CD14-positive monocyte (primary cell): ENCODE measurements at regions of chr19 and their contacts with region 1.

Region 1: DNA sequence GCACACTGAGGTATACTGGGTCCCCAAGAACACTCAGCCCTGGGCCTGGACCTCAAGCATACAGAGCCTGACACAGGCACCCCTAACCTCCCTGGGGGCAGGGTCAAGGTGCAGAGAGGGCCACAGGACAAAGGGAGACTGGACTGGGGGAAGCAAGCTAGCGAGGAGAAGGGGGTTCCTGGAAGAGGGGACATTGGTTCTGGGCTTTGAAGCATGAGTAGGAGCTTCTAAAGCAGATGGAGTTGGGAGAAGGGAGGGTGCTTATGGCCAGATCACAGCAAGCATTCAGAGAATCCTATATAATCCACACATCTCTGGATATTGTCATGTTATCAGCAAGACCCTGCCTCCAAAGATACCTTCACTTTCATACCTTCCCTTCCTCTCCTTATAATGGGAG is 3.2 kb downstream of the CIB3 start:
- DNase-seq: no peak
- H3K4me3 ChIP-seq: no peak overlapping the region
- H3K4me3 Mint-ChIP-seq: no peak overlapping the region
- H3K27ac ChIP-seq: no peak overlapping the region
- H3K27ac Mint-ChIP-seq: no peak overlapping the region
- H3K4me1 ChIP-seq: peaks cover 22 to 32% of the 10 kb centered on the region in 2 donors
- H3K4me1 Mint-ChIP-seq: peaks cover 27% of the 10 kb centered on the region
- H3K27me3 ChIP-seq: no peaks in the 10 kb centered on the region
- H3K27me3 Mint-ChIP-seq: peaks cover 0 to 2% (median 0%) of the 10 kb centered on the region in 3 donors
- CTCF ChIP-seq: no peak

Region 2: GRCh38 chr19:15280915-15281683 is 889.0 kb before region 1 on chr19:
- intact Hi-C with region 1: no loop called
- DNase-seq: peak; percentile 20 to 59 (median 44)
- H3K4me3 ChIP-seq: no peak overlapping the region
- H3K4me3 Mint-ChIP-seq: peak overlapping the region; percentile 6 to 48
- H3K27ac ChIP-seq: peak overlapping the region; percentile 23 to 69
- H3K27ac Mint-ChIP-seq: peak overlapping the region in 5 of 7 donors; percentile 58 to 81 (median 68)
- H3K4me1 ChIP-seq: peaks cover 61 to 77% of the 10 kb centered on the region in 2 donors
- H3K4me1 Mint-ChIP-seq: peaks cover 86% of the 10 kb centered on the region
- H3K27me3 ChIP-seq: no peaks in the 10 kb centered on the region
- H3K27me3 Mint-ChIP-seq: peaks cover 0 to 3% (median 3%) of the 10 kb centered on the region in 3 donors
- CTCF ChIP-seq: peak; percentile 28

Region 3: DNA sequence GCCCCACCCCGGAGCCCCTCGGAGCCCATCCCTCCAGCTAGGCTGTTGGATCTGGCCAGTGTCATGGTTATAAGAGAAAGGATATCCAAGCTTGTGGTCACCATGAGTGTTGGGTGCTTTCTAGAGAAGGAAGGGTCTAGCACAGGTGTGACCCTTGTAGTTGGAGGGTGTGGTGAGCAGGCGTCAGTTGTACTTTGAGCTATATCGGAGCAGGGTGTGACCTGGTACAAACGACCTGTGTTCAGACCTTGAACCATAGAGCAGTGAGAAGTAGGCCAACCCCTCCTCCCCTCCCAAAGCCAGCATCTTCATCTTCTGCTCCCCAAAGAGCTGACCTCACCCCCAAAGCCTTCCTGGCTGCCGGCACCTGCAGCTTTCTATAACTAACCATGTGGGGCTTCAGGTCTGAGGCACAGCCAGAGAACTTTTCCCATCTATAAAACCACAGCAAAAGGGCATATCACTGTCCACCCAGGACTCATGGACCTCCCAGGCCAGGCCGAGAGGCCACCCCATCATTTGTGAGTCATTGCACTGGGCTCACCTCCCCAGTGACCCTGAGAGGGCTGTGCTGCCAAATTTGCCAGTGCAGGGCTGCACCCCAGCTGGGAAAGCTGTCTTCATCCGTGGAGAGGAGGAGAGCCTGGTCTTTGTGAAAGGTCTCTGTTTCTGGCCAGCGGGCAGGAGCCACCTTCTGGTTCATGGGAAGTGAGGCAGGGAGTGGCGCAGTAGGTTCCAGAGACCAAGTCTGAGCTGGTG is 44.2 kb before region 1 on chr19:
- intact Hi-C with region 1: loop called in 1 of 2 experiments (anchors 5 kb)
- DNase-seq: no peak
- H3K4me3 ChIP-seq: no peak overlapping the region
- H3K4me3 Mint-ChIP-seq: no peak overlapping the region
- H3K27ac ChIP-seq: peak overlapping the region in 1 of 2 donors; percentile 45
- H3K27ac Mint-ChIP-seq: peak overlapping the region; percentile 18 to 75 (median 63)
- H3K4me1 ChIP-seq: no peaks in the 10 kb centered on the region
- H3K4me1 Mint-ChIP-seq: no peaks in the 10 kb centered on the region
- H3K27me3 ChIP-seq: no peaks in the 10 kb centered on the region
- H3K27me3 Mint-ChIP-seq: no peaks in the 10 kb centered on the region
- CTCF ChIP-seq: no peak